CD4-positive, alpha-beta T cell (primary cell): ENCODE measurements at regions of chr16 and their contacts with region 1.

Region 1: DNA sequence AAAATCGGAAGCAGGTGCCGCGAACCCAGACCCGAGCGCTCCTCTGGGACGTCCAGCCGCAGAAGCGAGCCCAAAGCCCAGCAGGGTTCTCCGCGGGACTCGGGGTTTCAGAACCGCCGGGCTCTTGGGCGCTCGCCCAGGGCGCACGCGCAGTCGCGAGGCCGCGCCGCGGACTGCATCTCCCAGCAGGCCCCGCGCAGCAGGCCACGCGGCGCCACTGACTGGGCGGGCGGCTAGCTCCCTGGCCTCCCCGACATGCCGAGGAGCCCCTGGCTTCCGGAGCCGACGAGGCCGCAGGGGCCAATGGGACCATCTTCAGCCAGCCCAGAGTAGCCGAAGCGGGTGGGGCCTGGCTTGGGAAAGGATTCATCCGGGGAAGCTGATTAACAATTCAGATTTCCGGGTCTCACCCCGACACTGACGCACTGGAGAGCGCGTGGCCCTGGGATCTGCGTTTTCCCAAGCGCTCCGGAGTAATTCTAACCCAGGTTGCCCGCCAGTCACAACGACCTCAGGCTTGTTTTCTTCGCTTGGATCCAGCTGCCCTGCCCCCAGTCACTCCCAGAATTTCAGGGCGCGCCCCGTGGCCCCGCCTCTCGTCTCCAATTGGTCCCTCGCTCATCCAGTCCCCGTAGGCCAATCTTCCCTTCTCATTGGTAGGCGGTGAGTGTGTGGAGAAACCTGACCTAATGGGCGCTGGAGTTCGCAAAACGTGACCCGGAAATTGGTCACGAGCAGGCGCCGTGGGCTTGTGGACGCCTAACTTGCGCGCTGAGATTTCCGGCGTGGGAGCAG is at the start of gene ZNF263:
- DNase-seq: peak; percentile 85 to 98 (median 90)
- ATAC-seq: peak; percentile 89
- H3K4me3 ChIP-seq: peak within 1 kb of the TSS; percentile 93
- H3K4me3 Mint-ChIP-seq: peak within 1 kb of the TSS; percentile 96
- H3K27ac ChIP-seq: peak within 1 kb of the TSS; percentile 89 to 100
- H3K27ac Mint-ChIP-seq: peak within 1 kb of the TSS; percentile 94
- H3K4me1 ChIP-seq: peaks cover 39% of the 10 kb centered on the region
- H3K4me1 Mint-ChIP-seq: peaks cover 42% of the 10 kb centered on the region
- H3K27me3 ChIP-seq: no peaks in the 10 kb centered on the region
- H3K27me3 Mint-ChIP-seq: no peaks in the 10 kb centered on the region
- CTCF ChIP-seq: no peak
- total RNA-seq, gene ZNF263: 35.3 to 39.4 TPM

Region 2: GRCh38 chr16:3134564-3135417 is 148.1 kb before region 1 on chr16 and contains the start of gene ZNF213:
- CTCF ChIA-PET with region 1: interaction called, 3 read pairs
- POLR2A ChIA-PET with region 1: interaction called, 13 read pairs
- intact Hi-C with region 1: no loop called
- DNase-seq: peak; percentile 79 to 99 (median 89)
- ATAC-seq: peak; percentile 97
- H3K4me3 ChIP-seq: peak within 1 kb of the TSS; percentile 84
- H3K4me3 Mint-ChIP-seq: peak within 1 kb of the TSS; percentile 99
- H3K27ac ChIP-seq: peak within 1 kb of the TSS; percentile 91 to 92
- H3K27ac Mint-ChIP-seq: peak within 1 kb of the TSS; percentile 94
- H3K4me1 ChIP-seq: peaks cover 29% of the 10 kb centered on the region
- H3K4me1 Mint-ChIP-seq: peaks cover 38% of the 10 kb centered on the region
- H3K27me3 ChIP-seq: no peaks in the 10 kb centered on the region
- H3K27me3 Mint-ChIP-seq: no peaks in the 10 kb centered on the region
- CTCF ChIP-seq: no peak
- total RNA-seq, gene ZNF213: 1.6 to 2.2 TPM

Region 3: DNA sequence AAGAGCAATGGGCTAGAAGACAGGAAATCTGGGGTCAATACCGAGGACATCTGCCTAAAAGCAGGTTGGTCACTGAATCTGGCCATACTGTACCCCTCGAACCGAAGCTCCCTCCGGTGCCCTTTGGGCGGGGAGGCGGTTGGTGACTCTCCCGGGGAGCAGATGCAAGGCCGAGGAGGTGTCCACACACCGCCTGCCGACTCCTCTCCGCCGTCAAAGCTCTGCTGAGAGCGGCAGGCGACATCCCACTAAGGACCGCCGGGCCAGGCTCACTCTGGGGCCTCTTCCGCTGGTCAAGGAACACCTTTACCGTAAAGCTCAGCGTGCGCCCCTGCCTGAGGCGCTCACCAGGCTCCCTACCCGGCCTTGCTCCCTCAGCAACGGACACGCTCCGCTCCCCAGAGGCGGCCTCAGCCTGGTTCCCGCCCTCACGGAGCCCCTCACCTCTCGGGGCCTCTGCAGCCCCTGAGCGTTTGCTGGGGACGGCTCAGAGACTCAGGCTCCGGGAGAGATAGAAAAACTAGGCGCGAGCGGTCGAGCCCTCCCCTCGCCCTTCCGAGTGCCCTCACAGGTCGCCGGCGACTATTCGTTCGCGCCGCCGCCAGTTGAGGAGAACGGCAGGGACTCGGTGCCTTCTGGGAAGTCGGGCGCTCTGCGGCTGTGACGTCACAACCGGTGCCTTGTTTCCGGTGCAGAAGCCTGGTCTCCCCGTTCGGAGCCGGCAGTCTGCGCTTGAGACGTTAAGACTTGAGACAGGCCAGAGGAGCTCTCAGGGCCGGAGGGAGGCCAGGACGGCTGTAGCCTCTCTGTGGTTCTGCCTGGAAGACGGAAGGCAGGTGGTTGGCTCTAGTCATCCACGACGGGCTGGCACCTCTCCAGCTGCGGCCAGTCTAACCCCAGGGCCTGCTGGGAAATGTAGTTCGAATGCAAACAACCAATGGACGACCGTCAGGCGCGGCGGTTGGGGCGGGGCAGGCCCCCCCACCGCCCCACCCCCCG is 48.1 kb before region 1 on chr16 and contains the start of gene ZNF200:
- CTCF ChIA-PET with region 1: no interaction called
- POLR2A ChIA-PET with region 1: interaction called, 13 read pairs
- intact Hi-C with region 1: loop called in 1 of 2 experiments (anchors 1 kb)
- DNase-seq: peak; percentile 86 to 97 (median 90)
- ATAC-seq: peak; percentile 89
- H3K4me3 ChIP-seq: peak within 1 kb of the TSS; percentile 98
- H3K4me3 Mint-ChIP-seq: peak within 1 kb of the TSS; percentile 94
- H3K27ac ChIP-seq: peak within 1 kb of the TSS; percentile 88 to 97
- H3K27ac Mint-ChIP-seq: peak within 1 kb of the TSS; percentile 94
- H3K4me1 ChIP-seq: peaks cover 27% of the 10 kb centered on the region
- H3K4me1 Mint-ChIP-seq: peaks cover 50% of the 10 kb centered on the region
- H3K27me3 ChIP-seq: no peaks in the 10 kb centered on the region
- H3K27me3 Mint-ChIP-seq: no peaks in the 10 kb centered on the region
- CTCF ChIP-seq: no peak
- total RNA-seq, gene ZNF200: 7.0 to 7.2 TPM

Region 4: DNA sequence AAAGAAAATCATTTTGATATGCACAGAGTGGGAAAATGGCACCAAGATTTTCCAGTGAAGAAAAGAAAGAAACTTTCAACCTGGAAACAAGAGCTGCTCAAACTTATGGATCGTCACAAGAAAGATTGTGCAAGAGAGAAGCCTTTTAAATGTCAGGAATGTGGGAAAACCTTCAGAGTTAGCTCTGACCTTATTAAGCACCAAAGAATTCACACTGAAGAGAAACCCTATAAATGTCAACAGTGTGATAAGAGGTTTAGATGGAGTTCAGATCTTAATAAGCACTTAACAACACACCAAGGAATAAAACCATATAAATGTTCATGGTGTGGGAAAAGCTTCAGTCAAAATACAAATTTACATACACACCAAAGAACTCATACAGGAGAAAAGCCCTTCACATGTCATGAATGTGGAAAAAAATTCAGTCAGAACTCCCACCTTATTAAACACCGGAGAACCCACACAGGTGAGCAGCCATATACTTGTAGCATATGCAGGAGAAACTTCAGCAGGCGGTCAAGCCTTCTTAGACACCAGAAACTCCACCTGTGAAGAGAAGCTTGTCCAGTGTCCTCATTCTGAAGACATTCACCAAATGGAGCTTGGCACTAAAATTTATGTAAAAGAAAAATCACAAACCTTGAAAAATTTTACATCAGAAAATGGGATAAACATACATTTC is 34.5 kb after region 1 on chr16:
- CTCF ChIA-PET with region 1: no interaction called
- POLR2A ChIA-PET with region 1: no interaction called
- intact Hi-C with region 1: no loop called
- DNase-seq: peak in 2 of 14 experiments; percentile 1 to 4
- ATAC-seq: no peak
- H3K4me3 ChIP-seq: no peak overlapping the region
- H3K4me3 Mint-ChIP-seq: no peak overlapping the region
- H3K27ac ChIP-seq: no peak overlapping the region
- H3K27ac Mint-ChIP-seq: no peak overlapping the region
- H3K4me1 ChIP-seq: no peaks in the 10 kb centered on the region
- H3K4me1 Mint-ChIP-seq: no peaks in the 10 kb centered on the region
- H3K27me3 ChIP-seq: no peaks in the 10 kb centered on the region
- H3K27me3 Mint-ChIP-seq: no peaks in the 10 kb centered on the region
- CTCF ChIP-seq: no peak

Region 5: DNA sequence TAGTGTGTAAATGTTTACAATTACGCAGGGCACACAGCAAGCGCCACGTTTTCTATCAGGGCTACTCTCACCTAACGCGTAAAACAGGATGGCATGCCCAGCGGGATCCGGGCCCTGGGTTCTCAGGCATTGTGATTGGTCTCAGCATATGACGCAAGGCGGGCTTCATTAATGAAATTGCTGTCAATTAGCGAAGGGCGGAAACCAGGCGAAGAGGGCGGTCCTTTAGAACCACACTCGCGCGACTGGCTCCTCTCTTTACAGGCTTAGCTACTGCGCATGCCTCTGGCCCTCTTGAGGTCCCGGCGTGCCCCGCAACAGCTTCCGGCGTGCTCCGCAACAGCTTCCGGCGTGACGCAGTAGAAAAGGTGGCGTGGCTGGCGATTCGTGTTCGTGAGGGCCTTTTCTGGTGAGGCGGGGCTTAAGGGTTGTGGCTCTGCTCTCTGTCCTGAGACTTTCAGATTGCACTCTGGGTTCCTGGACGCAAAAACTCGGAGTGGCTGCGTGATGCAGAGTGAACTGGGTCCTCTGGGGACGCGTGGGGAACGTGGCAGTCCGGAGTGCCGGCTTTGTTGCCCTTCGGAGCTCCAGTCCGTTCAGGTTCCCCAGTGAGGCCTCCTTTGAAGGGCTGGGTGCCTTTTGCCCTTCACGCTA is 82.0 kb after region 1 on chr16:
- CTCF ChIA-PET with region 1: no interaction called
- POLR2A ChIA-PET with region 1: interaction called, 29 read pairs
- intact Hi-C with region 1: no loop called
- DNase-seq: peak; percentile 70 to 97 (median 80)
- ATAC-seq: peak; percentile 94
- H3K4me3 ChIP-seq: peak overlapping the region; percentile 56
- H3K4me3 Mint-ChIP-seq: peak overlapping the region; percentile 92
- H3K27ac ChIP-seq: peak overlapping the region; percentile 38 to 82
- H3K27ac Mint-ChIP-seq: peak overlapping the region; percentile 89
- H3K4me1 ChIP-seq: peaks cover 17% of the 10 kb centered on the region
- H3K4me1 Mint-ChIP-seq: peaks cover 6% of the 10 kb centered on the region
- H3K27me3 ChIP-seq: peaks cover 10 to 11% of the 10 kb centered on the region in 2 experiments
- H3K27me3 Mint-ChIP-seq: peaks cover 30% of the 10 kb centered on the region
- CTCF ChIP-seq: no peak

Region 6: GRCh38 chr16:3443108-3444031 is 160.4 kb after region 1 on chr16 and contains the starts of genes NAA60 and ZNF597:
- CTCF ChIA-PET with region 1: no interaction called
- POLR2A ChIA-PET with region 1: interaction called, 28 read pairs
- intact Hi-C with region 1: no loop called
- DNase-seq: peak; percentile 50 to 92 (median 72)
- ATAC-seq: peak; percentile 90
- H3K4me3 ChIP-seq: peak within 1 kb of the TSS; percentile 71
- H3K4me3 Mint-ChIP-seq: peak within 1 kb of the TSS; percentile 98
- H3K27ac ChIP-seq: peak within 1 kb of the TSS; percentile 70 to 79
- H3K27ac Mint-ChIP-seq: peak within 1 kb of the TSS; percentile 95
- H3K4me1 ChIP-seq: peaks cover 25% of the 10 kb centered on the region
- H3K4me1 Mint-ChIP-seq: peaks cover 24% of the 10 kb centered on the region
- H3K27me3 ChIP-seq: no peaks in the 10 kb centered on the region
- H3K27me3 Mint-ChIP-seq: no peaks in the 10 kb centered on the region
- CTCF ChIP-seq: no peak
- total RNA-seq, gene NAA60: 27.2 to 27.8 TPM
- total RNA-seq, gene ZNF597: 2.3 to 2.5 TPM

Region 7: GRCh38 chr16:3611146-3611975 is 328.4 kb after region 1 on chr16 and contains the start of gene SLX4:
- CTCF ChIA-PET with region 1: no interaction called
- POLR2A ChIA-PET with region 1: interaction called, 3 read pairs
- intact Hi-C with region 1: loop called in 1 of 2 experiments (anchors 2 kb)
- DNase-seq: peak; percentile 76 to 99 (median 92)
- ATAC-seq: peak; percentile 86
- H3K4me3 ChIP-seq: peak within 1 kb of the TSS; percentile 95
- H3K4me3 Mint-ChIP-seq: peak within 1 kb of the TSS; percentile 98
- H3K27ac ChIP-seq: peak within 1 kb of the TSS; percentile 80 to 86
- H3K27ac Mint-ChIP-seq: peak within 1 kb of the TSS; percentile 90
- H3K4me1 ChIP-seq: peaks cover 37% of the 10 kb centered on the region
- H3K4me1 Mint-ChIP-seq: peaks cover 53% of the 10 kb centered on the region
- H3K27me3 ChIP-seq: no peaks in the 10 kb centered on the region
- H3K27me3 Mint-ChIP-seq: no peaks in the 10 kb centered on the region
- CTCF ChIP-seq: no peak
- total RNA-seq, gene SLX4: 5.1 to 5.2 TPM